Activated CD8-positive, alpha-beta T cell treated with anti-CD3 and anti-CD28 coated beads, Interleukin-2, amount 10 ng/mL, durations not matched to agents 7 days and 5 days (primary cell): ENCODE measurements at regions of chr4 and their contacts with region 1.

Region 1: DNA sequence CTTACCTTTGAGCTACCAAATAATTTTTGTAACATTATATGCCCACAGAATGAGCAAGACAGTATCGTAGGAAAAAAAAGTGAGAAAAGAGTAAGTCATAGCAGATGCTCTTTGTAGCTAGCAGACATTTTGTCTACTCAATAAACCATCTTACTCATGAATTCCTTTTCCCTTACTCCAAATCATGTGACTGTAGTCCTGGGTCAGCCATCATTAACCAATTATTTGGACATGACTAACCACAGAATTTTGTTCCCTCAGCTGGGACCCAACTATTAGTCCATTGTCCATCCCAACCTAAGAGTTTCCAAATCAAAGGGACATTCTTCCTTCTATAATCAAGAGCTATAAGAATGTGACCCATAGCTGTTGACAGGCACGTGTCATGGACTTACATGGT is 11.4 kb downstream of the UBE2D3 start:
- DNase-seq: no peak
- ATAC-seq: no peak
- H3K4me3 Mint-ChIP-seq: no peak overlapping the region
- H3K27ac Mint-ChIP-seq: no peak overlapping the region
- H3K4me1 Mint-ChIP-seq: peaks cover 83% of the 10 kb centered on the region
- H3K27me3 Mint-ChIP-seq: no peaks in the 10 kb centered on the region

Region 2: DNA sequence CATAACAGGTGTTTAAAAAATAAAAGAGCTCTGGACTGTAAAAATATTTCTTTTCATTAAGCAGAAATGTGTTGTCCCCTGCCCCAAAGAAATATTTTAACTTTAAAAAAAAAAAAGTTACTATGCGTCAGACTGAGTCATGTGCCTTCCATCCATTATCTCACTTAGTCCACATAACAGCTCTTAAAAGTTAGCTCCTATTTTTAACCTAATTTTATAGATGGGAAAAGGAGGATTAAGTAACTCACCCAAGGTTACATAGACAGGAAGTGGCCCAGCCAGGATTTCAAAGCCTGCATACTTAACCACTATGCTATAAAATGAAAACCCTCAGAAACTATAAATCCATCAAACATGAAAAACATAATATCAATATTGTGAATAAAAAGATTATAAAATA is 152.9 kb before region 1 on chr4:
- CTCF ChIA-PET with region 1: no interaction called
- POLR2A ChIA-PET with region 1: no interaction called
- DNase-seq: no peak
- ATAC-seq: no peak
- H3K4me3 Mint-ChIP-seq: no peak overlapping the region
- H3K27ac Mint-ChIP-seq: no peak overlapping the region
- H3K4me1 Mint-ChIP-seq: peaks cover 3% of the 10 kb centered on the region
- H3K27me3 Mint-ChIP-seq: no peaks in the 10 kb centered on the region

Region 3: DNA sequence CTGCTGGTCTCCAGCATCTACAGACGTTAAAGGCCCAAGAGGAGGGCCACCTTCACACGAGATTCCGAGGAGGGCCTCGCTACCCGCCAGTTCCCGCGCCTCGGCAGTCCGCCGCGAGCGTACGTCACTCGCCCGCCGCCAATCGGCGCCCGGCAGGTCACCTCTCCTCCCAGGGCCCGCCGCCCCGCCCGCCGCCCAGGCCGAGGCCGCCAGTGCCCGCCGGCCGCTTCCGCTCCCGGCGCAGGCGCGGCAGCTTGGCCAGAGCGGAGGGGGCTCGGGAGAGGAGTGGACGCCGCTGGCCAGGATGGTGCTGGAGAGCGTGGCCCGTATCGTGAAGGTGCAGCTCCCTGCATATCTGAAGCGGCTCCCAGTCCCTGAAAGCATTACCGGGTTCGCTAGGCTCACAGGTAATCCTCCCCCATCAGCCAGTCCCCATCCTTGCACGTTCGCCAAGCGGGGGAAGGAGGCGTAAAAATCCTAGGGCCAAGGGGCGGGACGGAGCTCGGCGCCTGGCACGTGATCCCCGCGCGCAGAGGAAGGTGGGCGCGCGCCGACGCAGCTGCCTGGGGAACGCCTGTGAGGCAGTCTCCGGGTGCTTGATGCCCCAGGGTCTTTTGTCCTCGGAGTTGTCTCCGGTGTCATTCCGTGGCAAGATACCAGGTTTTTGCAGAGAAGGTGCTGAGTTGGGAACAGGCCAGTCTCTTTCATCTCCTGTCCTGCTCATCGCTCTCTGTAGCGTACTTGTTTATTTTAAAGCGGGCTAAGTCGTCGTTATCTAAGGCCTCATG is 53.0 kb after region 1 on chr4 and contains the start of gene CISD2:
- CTCF ChIA-PET with region 1: no interaction called
- POLR2A ChIA-PET with region 1: interaction called, 346 read pairs
- DNase-seq: peak; percentile 95
- ATAC-seq: peak; percentile 88
- H3K4me3 Mint-ChIP-seq: peak within 1 kb of the TSS; percentile 98
- H3K27ac Mint-ChIP-seq: peak within 1 kb of the TSS; percentile 98
- H3K4me1 Mint-ChIP-seq: peaks cover 62% of the 10 kb centered on the region
- H3K27me3 Mint-ChIP-seq: no peaks in the 10 kb centered on the region
- total RNA-seq, gene CISD2: 37.7 to 40.0 TPM